ENCODE measurements at regions of chr13 and their contacts with region 1.

Region 1: DNA sequence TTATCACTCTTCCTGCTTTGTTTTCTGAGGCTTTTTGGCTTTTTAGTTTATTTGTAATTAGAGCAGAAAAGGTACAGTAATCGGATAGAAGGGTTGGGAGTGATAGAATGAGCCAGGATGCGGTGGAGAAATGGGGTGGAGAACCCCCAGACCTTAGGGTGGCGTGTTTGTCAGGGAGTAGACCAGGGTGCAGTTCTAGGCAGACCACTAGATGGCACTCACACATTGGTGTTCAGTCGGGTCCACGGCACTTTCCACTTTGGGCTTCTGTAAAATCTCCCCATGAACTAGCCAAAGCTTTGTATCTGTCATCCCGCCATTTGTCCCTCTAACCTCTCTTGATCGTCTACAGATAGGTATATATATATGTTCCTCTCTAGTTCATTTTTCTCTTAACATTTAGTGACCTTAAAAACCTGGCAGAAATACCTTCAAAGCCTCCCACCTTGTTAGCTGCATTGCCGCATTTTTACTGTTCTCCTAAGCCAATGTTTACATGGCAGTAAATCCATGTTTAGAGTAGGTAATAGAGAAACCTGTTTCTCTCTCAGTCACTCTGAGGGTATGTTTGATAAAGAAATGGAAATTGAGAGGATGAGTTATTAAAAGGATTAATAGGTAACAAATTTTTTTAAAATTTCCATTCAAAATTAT is 154.9 kb downstream of the TM9SF2 start:
- DNase-seq: peak; percentile 45
- H3K4me3 ChIP-seq: no peak overlapping the region
- H3K27ac ChIP-seq: no peak overlapping the region
- H3K4me1 ChIP-seq: no peaks in the 10 kb centered on the region
- CTCF ChIP-seq: peak; percentile 82

Region 2: DNA sequence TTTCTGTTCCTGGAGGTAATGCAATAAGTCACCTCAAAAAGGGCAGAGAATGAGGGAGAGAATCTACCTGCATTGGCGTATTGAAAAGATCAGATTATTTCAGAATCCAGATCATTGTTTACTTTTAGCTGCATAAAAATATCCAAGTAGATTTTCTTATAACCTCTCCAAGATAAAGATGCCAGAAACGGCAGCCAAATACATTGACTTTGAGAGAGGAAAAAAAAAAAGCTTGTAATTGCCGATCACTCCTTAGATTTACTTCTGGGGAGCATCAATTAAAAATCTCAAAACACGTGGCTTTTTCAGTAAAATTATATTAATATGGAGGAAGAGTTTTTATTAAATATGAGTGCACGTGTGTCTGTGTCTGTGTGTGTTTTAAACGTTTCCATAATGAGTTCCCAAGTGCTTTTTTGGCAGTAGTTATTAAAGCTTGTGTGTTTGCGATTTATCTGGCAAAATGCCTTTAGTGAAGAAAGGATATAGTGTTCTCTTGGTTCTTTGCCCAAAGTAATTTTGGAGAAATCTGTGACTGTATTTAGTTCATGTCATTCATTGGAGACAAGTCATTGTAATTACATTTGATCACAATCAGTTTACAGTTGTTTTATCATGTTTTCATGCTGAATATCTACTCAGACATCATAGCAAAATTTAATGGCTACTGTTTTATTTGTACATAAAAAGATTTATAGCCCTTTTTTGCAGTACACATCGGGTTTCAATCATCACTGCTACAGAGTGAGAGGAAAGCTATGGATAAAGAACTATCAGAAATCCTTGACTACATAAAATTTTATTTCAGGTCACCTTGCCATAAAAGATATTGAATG is 21.1 kb after region 1 on chr13:
- CTCF ChIA-PET with region 1: no interaction called
- POLR2A ChIA-PET with region 1: no interaction called
- intact Hi-C with region 1: no loop called
- DNase-seq: no peak
- H3K4me3 ChIP-seq: no peak overlapping the region
- H3K27ac ChIP-seq: no peak overlapping the region
- H3K4me1 ChIP-seq: no peaks in the 10 kb centered on the region
- CTCF ChIP-seq: no peak

Region 3: GRCh38 chr13:99704390-99704789 is 48.2 kb after region 1 on chr13:
- CTCF ChIA-PET with region 1: no interaction called
- POLR2A ChIA-PET with region 1: no interaction called
- intact Hi-C with region 1: loop called (anchors 2 kb)
- DNase-seq: no peak
- H3K4me3 ChIP-seq: no peak overlapping the region
- H3K27ac ChIP-seq: no peak overlapping the region
- H3K4me1 ChIP-seq: no peaks in the 10 kb centered on the region
- CTCF ChIP-seq: no peak

Region 4: DNA sequence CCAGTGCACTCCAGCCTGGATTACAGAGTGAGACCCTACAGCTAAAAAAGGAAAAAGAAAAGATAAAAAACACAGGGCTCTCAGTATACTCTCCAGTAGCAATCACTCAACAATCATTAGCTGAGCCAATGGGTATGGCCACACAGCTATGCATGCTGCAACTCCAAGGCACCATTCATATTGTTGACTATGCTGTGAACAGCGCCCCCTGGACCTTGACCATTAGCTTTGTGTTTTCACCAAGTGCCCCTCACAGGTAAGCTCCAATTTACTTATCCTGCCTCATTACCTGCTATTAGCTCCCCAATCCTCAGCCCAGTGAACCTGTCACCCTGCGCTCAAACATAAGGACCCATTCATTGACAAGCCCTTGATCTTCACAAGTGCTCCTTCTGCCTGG is 279.6 kb after region 1 on chr13:
- CTCF ChIA-PET with region 1: no interaction called
- POLR2A ChIA-PET with region 1: no interaction called
- intact Hi-C with region 1: no loop called
- DNase-seq: no peak
- H3K4me3 ChIP-seq: no peak overlapping the region
- H3K27ac ChIP-seq: no peak overlapping the region
- H3K4me1 ChIP-seq: no peaks in the 10 kb centered on the region
- CTCF ChIP-seq: 0 out of 2 replicates have a peak, but pooled peaks have one; percentile 10

Region 5: DNA sequence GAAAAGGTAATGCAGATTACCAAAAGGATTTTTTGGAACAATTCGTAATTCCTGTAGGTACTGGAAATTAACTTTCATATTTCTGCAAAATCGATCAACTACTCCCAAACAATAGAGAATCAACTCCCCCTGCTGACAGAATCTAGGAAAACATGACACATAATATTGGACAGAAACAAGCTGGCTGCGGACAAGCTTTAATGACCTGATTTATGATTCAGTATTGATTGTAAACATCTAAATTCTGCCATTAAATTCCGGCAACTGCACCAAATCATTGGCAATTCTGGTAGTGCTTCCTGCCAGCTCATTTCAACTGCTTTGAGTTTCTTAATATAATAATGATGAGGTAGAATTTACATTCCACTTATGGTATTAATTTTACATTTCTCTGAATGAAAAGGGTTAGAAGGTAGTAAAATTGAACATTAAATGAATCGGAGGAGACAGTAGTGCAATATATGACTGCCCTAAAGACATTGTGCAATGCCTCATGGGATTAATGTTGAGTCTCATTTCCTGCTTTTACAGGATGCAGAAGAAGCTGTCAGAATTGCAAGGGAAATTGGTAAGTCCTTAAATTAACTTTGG is 579.2 kb after region 1 on chr13:
- CTCF ChIA-PET with region 1: no interaction called
- POLR2A ChIA-PET with region 1: no interaction called
- intact Hi-C with region 1: loop called (anchors 10 kb)
- DNase-seq: peak; percentile 15
- H3K4me3 ChIP-seq: no peak overlapping the region
- H3K27ac ChIP-seq: no peak overlapping the region
- H3K4me1 ChIP-seq: peaks cover 5% of the 10 kb centered on the region
- CTCF ChIP-seq: peak; percentile 72